ENCODE measurements at regions of chr6 and their contacts with region 1.

Region 1: DNA sequence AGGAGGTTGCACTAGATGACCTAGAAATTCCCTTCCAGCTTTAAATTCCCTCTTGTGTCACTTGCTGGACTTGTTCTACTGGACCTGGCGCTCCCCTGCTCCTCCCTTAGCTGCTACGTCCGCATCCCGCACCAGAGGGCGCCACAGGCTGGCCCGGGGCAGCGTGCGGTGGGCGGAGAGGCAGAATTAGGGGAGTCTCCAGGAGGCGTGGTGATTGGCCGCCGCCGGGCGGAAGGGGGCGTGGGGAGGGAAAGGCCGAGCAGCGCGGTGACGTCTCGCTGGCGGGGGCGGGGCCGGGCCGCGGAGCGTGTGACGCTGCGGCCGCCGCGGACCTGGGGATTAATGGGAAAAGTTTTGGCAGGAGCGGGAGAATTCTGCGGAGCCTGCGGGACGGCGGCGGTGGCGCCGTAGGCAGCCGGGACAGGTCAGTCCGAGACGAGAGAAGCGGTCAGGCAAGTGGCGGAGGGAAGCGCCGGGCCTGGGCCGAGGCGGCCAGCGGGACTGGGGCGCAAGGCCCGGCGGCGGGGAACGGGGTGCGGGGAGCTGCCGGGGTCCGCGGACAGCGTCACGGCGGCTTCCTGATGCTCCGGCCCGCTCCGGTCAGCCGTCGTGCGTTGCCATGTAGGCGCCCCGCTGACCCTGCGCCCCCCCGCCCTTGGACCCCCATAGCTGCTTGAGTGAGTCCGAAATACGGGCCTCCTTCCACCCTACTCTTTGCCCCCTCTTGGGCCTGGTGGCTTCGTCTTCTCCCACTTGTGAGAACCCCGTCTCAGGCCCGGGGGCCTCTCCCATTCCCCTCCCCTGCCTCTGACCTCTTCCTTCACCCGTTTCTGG is at the start of gene PPARD:
- DNase-seq: peak; percentile 100
- H3K4me3 ChIP-seq: peak within 1 kb of the TSS; percentile 74 to 85
- H3K27ac ChIP-seq: peak within 1 kb of the TSS; percentile 45 to 87
- H3K4me1 ChIP-seq: peaks cover 0 to 23% of the 10 kb centered on the region in 2 experiments; a peak in 2 of 4 replicates
- H3K27me3 ChIP-seq: no peaks in the 10 kb centered on the region
- CTCF ChIP-seq: peak; percentile 98
- EP300 ChIP-seq: no peak
- RAD21 ChIP-seq: peak; percentile 99
- polyA plus RNA-seq, gene PPARD: 11.5 and 13.3 TPM in 2 replicates

Region 2: GRCh38 chr6:34630040-34630439 is 712.4 kb before region 1 on chr6:
- CTCF ChIA-PET with region 1: no interaction called
- POLR2A ChIA-PET with region 1: no interaction called
- DNase-seq: no peak
- H3K4me3 ChIP-seq: no peak overlapping the region
- H3K27ac ChIP-seq: peak overlapping the region in 1 of 2 experiments; percentile 93; a peak in 2 of 4 replicates
- H3K4me1 ChIP-seq: no peaks in the 10 kb centered on the region
- H3K27me3 ChIP-seq: no peaks in the 10 kb centered on the region
- CTCF ChIP-seq: no peak
- EP300 ChIP-seq: peak in 1 of 2 experiments; percentile 40; a peak in 1 of 4 replicates
- RAD21 ChIP-seq: no peak

Region 3: DNA sequence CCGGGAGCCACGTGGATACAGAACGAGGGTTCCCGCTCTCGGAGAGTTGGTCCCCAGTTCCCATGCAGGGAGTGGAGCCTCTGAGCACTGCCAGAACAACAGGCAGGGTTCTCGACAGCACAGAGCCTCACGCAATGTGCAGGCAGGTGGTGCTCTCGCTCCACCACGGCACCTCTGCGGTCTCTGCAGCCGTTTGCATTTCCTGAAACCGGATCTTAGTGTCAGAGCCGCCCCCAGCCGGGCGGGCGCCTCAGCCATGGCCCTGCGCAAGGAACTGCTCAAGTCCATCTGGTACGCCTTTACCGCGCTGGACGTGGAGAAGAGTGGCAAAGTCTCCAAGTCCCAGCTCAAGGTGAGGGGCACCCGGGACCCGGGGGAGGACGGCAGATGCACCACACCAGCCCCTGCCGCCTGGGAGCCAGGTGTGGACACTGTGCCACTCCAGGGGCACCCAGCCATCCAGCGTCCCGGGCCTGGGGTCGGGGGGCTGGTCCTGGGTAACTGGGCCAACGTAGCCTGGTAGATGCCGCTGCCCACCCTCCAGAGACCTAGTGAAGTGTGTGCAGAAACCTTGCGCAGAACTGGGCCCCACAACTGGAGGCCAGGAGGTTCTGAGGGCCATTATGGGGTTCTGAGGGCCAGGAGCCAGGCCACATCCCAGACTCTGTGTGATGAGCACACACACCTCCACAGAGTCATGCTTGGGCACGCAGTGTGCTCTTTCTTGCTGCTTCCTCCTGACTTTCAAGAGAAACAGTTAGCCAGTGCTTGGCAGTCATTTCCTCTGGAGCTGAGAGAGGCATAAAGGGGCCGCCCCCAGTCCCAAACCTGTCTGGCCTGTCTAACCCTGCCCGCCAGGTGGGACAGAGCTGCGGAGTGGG is 44.6 kb before region 1 on chr6 and contains the start of gene DEF6:
- CTCF ChIA-PET with region 1: interaction called, 16 read pairs
- POLR2A ChIA-PET with region 1: no interaction called
- DNase-seq: peak; percentile 49
- H3K4me3 ChIP-seq: no peak within 1 kb of the TSS
- H3K27ac ChIP-seq: no peak within 1 kb of the TSS
- H3K4me1 ChIP-seq: peaks cover 0 to 4% of the 10 kb centered on the region in 2 experiments; a peak in 1 of 4 replicates
- H3K27me3 ChIP-seq: no peaks in the 10 kb centered on the region
- CTCF ChIP-seq: peak; percentile 24; the same call in 1 of the 2 replicates
- EP300 ChIP-seq: no peak
- RAD21 ChIP-seq: peak; percentile 53
- polyA plus RNA-seq, gene DEF6: 0.13 and 0.16 TPM in 2 replicates

Region 4: DNA sequence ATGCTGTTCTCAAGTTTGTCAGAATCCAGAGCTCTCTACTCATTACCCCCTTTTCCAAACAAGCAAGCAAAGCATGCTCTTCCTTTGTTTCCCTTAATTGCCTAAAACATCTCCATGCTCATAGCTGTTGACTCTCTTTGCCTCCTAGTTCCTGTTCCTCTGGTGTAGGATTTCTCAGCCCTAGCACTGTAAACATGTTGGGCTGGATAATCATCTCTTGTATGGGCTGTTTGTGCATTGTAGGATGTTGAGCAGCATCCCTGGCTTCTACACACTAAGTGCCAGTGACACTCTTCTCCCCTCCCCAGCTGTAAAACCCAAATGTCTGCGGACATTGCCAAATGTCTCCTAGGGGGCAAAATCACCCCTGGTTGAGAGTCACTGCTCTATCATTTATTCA is 13.9 kb after region 1 on chr6:
- CTCF ChIA-PET with region 1: interaction called, 12 read pairs
- POLR2A ChIA-PET with region 1: no interaction called
- DNase-seq: no peak
- H3K4me3 ChIP-seq: no peak overlapping the region
- H3K27ac ChIP-seq: no peak overlapping the region
- H3K4me1 ChIP-seq: peaks cover 11 to 27% of the 10 kb centered on the region in 2 experiments; a peak in 1 of 4 replicates
- H3K27me3 ChIP-seq: no peaks in the 10 kb centered on the region
- CTCF ChIP-seq: no peak
- EP300 ChIP-seq: no peak
- RAD21 ChIP-seq: no peak

Region 5: GRCh38 chr6:35427851-35428321 is 85.4 kb after region 1 on chr6:
- CTCF ChIA-PET with region 1: interaction called, 11 read pairs
- POLR2A ChIA-PET with region 1: no interaction called
- DNase-seq: no peak
- H3K4me3 ChIP-seq: no peak overlapping the region
- H3K27ac ChIP-seq: peak overlapping the region in 1 of 2 experiments; percentile 66; a peak in 2 of 4 replicates
- H3K4me1 ChIP-seq: peaks cover 0 to 21% of the 10 kb centered on the region in 2 experiments; a peak in 1 of 4 replicates
- H3K27me3 ChIP-seq: no peaks in the 10 kb centered on the region
- CTCF ChIP-seq: no peak
- EP300 ChIP-seq: no peak
- RAD21 ChIP-seq: no peak

Region 6: GRCh38 chr6:35452186-35453090 is 110.0 kb after region 1 on chr6 and contains the start of gene FANCE:
- CTCF ChIA-PET with region 1: interaction called, 186 read pairs
- POLR2A ChIA-PET with region 1: interaction called, 14 read pairs
- DNase-seq: peak; percentile 98
- H3K4me3 ChIP-seq: peak within 1 kb of the TSS; percentile 64 to 70
- H3K27ac ChIP-seq: no peak within 1 kb of the TSS; a peak in 1 of 4 replicates
- H3K4me1 ChIP-seq: peaks cover 0 to 17% of the 10 kb centered on the region in 2 experiments; a peak in 2 of 4 replicates
- H3K27me3 ChIP-seq: no peaks in the 10 kb centered on the region
- CTCF ChIP-seq: no peak
- EP300 ChIP-seq: no peak
- RAD21 ChIP-seq: no peak
- polyA plus RNA-seq, gene FANCE: 5.8 and 6.5 TPM in 2 replicates

Region 7: GRCh38 chr6:35468181-35468979 is 125.9 kb after region 1 on chr6 and contains the start of gene RPL10A:
- CTCF ChIA-PET with region 1: interaction called, 43 read pairs
- POLR2A ChIA-PET with region 1: interaction called, 4 read pairs
- DNase-seq: peak; percentile 97
- H3K4me3 ChIP-seq: peak within 1 kb of the TSS; percentile 67 to 90
- H3K27ac ChIP-seq: peak within 1 kb of the TSS; percentile 85 to 89
- H3K4me1 ChIP-seq: peaks cover 23 to 26% of the 10 kb centered on the region in 2 experiments; a peak in 3 of 4 replicates
- H3K27me3 ChIP-seq: no peaks in the 10 kb centered on the region
- CTCF ChIP-seq: peak; percentile 96
- EP300 ChIP-seq: no peak
- RAD21 ChIP-seq: peak; percentile 77
- polyA plus RNA-seq, gene RPL10A: 2,393 and 3,548 TPM in 2 replicates